ENCODE measurements at regions of chr11 and their contacts with region 1.

Region 1: GRCh38 chr11:61816736-61817455 is at the start of gene FADS1:
- DNase-seq: peak; percentile 85
- CTCF ChIP-seq: peak; percentile 64

Region 2: GRCh38 chr11:61800331-61801281 is 16.3 kb before region 1 on chr11:
- CTCF ChIA-PET with region 1: interaction called, 103 read pairs
- POLR2A ChIA-PET with region 1: interaction called, 9 read pairs
- DNase-seq: no peak
- CTCF ChIP-seq: no peak

Region 3: DNA sequence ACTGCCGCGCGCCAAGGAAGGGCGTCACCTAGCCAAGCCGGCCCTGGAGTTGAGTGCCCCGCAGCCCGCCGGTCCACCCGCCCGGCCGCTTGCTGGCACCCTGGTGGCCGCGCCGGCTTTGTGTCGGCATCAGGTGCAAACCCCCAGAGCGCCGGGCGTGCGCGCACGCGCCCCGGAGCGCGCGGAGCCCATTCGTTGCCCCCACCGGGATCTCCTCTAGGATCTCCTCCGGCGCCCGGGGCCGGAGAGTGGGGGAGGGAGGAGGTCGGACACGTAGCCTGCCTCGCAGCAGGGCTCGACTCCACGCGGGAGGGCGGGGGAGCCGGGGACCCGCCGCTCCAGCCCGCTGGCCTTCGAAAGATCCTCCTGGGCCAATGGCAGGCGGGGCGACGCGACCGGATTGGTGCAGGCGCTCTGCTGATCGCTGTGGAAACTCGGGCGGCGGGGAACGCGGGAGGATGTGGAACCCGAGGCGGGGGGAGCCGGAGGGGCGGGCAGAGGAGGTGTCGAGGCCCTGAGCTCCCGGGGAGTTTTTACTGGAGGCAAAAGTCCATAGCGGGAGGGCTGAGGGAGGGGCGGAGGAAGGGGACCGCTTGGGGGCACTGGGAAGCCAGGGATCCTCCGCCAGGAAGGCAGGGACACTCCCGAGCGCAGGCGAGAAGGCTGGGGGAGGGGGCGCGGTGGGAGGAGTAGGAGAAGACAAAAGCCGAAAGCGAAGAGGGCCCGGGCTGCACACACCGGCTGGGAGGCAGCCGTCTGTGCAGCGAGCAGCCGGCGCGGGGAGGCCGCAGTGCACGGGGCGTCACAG is 10.9 kb after region 1 on chr11 and contains the start of gene FADS2:
- CTCF ChIA-PET with region 1: interaction called, 52 read pairs
- POLR2A ChIA-PET with region 1: interaction called, 7 read pairs
- DNase-seq: peak; percentile 93
- CTCF ChIP-seq: no peak

Region 4: DNA sequence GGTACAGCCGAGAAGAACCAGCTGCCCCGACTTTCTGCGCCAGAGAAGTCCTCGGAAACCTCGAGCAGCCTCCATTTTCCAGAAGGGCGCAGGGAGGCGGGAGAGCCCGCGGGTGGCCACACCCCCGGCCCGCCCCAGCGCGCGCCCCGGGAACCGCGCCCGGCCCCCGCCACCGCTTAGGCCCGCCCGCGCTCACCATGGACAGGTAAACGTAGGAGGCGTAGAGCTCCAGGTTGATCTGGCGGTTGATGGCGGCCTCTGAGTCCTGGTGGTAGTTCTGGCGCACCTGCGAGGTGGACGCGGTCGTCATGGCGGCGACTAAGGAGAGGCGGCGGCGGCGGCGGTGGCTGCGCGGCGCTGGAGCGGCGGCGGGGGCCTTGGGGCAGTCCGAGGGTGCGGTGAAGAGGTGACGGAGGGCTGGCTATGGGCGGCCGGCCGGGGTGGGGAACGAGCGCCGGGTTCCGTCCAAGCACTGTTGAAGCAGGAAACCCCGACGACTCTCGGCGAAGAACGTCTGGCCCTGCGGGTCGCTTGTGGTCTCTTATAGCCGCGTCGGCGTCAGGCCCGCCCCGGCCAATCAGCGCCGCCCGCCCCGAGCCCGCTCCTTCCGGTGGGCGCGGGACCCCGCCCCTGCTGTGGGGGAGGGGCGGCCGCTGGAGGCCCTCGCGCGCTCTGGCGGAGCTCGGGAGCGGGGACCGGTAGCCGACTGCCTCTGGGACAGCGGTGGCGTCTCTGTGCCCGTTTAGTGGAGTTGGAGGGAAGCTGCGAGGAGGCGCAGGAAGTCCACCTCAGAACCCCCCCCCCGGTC is 150.4 kb after region 1 on chr11 and contains the start of gene FTH1:
- CTCF ChIA-PET with region 1: no interaction called
- POLR2A ChIA-PET with region 1: interaction called, 16 read pairs
- DNase-seq: peak; percentile 94
- CTCF ChIP-seq: no peak

Measured in GM10248 (cell line).